ENCODE measurements at regions of chr21 and their contacts with region 1.

Region 1: DNA sequence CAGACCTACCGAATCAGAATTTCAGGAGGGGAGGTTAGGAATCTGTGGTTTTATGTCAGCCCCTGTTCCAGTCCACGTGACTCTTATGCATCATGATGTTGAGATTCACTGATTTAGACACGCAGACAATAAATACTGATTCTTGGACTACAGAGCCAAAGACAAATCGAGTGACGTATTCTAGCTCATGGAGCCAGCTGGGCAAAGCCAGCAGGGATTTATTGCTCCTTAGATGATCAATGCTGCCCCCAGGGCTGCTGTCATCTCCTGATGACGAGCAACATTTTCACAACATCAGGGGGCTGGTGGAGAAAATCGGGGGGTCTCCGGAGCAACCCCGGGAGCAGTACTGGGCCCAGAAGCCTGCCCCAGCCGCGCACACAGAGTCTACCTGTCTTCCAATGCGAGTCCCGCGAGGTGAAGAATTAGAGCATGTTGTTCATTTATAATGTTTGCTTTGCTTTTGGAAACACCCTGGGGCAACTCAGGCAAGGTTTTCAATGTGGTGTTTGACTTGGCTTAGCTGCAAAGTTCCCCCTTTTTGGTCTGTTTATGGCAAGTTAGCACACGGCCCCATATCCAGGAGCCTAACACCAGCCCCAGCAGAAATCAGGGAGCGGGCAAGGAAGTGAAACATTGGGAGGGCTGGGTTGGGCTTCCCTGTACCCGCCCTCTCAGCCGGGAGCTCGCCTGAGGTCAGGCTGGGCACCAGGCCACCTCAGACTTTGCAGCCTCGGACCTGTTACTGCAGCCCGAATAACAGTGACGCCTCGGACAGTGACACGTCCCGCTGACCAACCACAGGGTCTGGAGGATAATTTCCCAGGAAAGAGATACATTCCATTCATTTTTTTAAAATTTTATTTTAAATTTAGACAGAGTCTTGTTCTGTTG is 19.9 kb upstream of the CLDN14 start:
- DNase-seq: no peak
- H3K4me3 ChIP-seq: no peak overlapping the region
- H3K4me1 ChIP-seq: no peaks in the 10 kb centered on the region
- H3K27me3 ChIP-seq: no peaks in the 10 kb centered on the region

Region 2: DNA sequence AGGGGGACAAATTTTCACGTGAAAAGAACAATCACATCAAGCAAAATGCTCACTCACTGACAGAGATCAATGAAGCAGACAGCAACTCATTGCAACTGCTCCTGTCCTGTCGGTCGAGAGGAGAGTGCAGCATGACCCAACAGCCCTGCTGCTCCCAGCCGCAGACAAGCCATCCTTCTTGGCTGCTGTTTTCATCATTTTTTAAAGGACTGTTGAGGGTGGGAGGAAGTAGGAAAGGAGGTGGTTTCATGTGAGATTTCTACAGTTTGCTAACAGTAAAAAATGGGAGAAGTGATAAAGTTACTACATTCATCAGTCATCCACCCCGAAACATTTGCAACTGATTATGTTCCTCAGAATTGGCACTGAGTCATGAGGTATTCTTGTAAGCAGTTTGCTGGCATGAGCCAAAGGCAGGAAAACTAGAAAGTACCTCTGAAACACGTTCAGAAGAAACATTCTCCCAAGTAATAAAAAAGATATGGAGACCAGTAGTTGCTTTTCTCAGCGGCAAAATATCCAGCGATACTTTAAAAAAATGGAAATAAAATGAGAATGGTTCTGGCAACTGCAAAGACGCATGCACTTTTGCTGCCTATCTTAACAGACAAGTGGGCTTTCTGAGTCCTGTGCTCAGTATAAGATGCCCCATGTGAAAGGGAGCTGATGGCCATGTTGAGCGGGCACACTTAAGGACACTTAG is 52.1 kb after region 1 on chr21:
- in situ Hi-C with region 1: loop called (anchors 10 kb)
- DNase-seq: no peak
- H3K4me3 ChIP-seq: no peak overlapping the region
- H3K4me1 ChIP-seq: no peaks in the 10 kb centered on the region
- H3K27me3 ChIP-seq: peaks cover 4% of the 10 kb centered on the region; the same call in 1 of the 2 replicates